ENCODE measurements at regions of chr19 and their contacts with region 1.

Region 1: DNA sequence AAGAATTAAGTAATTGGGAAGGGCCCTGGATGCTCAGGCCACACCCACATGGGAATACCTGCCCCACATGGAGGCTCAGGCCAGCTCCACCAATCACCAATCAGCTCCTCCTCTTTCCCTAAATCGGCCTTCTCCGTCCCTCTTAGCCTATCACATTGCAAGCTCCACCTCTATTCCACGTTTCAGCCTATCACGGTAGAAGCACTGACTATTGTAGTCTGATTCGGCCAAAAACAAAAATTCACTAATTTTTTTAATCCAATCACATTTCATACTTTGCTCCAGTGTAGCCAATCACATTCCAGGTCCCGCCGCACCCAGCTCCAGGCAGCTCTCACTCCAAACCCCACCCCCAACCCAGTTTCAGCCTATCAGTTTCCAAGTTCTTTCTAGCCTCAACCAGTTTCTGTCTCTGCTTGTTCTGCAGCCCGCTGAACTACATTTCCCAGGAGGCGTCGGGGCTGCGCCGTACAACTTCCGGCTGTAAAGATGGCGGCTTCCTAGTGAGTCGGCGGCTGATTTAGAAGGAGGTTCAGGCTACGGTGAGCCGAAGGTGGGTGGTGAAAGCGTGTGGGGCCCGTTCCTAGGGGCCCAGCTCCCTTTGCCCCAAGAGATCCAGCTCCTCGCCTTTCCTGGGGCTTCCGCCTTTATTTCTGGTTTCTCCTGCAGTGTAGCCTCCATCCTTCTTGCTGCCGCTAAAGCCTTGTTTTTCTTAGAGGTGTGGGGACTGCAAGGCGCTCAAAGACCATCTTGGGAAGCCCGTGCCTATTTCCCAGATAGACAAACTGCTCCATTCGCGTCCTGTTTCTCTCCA is at the start of gene BABAM1:
- H3K4me3 ChIP-seq: peak within 1 kb of the TSS; percentile 73
- H3K27ac ChIP-seq: peak within 1 kb of the TSS; percentile 62
- H3K4me1 ChIP-seq: no peaks in the 10 kb centered on the region
- CTCF ChIP-seq: no peak

Region 2: DNA sequence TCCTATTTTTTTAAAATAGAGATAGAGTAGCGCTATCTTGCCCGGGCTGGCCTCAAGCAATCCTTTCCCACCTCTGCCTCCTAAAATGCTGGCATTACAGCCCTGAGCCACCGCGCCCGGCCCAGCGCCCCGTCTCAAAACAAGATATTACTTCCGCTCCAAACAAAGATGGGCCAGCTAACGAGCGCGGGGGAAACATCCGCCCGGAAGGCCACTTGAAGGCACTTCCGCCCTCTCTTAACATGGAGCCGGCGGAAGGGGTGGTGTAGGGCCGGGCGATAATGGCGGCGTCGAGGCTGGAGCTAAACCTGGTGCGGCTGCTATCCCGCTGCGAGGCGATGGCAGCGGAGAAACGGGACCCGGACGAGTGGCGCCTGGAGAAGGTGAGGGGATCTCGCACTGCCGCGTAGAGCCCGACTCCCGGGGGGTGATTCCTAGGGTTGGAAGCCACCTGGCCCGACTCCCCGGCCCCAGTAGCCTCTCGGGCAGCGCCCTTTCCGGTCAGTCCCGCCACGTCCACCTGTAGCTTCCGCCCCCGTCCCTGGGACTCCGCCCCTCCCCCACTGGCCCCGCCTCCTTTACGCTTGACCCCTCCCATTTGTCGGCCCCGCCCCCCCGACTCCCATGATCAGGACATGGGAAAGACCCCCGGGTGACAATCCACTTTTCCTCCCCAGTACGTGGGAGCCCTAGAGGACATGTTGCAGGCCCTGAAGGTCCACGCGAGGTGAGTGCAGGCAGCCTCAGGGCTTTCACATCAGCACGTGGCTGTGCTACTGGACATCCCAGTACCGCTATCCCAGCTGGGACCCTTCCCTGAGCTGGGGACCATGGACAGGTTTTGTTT is 51.8 kb before region 1 on chr19 and contains the start of gene USE1:
- CTCF ChIA-PET with region 1: interaction called, 3 read pairs
- POLR2A ChIA-PET with region 1: interaction called, 23 read pairs
- H3K4me3 ChIP-seq: peak within 1 kb of the TSS; percentile 91
- H3K27ac ChIP-seq: peak within 1 kb of the TSS; percentile 63
- H3K4me1 ChIP-seq: no peaks in the 10 kb centered on the region
- CTCF ChIP-seq: peak; percentile 16; the same call in 1 of the 2 replicates

Region 3: DNA sequence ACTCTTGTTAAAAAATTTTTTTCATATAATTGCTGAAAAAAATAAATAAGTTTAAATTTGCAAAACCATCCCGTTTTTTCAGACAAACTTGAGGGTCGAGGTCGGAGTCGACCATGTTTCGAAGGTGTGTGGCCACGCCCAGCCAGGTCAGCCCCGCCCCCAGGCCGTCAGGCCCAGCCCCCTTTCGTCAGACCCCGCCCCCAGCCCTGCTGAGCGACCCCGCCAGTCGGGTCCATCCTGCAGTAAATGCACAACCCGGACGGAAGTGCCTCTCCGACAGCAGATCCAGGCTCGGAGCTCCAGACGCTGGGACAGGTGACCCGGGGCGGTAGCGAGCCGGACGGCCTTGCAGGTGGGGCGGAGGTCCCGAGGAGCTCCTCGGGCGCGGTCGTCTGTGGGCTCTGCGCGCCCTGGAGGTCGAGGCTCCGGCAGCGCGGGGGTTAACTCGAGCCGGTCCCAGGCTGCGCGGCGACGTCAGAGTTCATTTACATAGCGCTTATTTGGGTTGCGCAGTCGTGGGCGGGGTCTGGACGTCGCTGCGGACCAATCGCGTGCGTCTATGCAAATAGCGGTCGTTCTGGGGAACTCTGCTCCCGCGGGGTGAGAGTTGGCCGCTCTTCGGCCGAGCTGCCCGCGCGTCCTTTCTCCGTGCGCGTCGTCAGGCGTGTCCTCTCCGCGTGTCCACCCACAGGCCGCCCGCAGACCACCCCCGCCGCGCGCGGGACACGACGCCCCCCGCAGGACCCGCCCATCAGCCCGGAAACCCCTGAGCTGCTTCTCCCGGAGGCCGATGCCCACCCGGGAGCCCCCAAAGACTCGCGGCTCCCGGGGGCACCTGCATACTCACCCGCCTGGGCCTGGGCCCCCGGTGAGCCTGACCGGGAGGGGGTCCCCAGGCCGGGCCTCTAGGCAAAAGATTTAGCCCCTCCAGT is 40.9 kb before region 1 on chr19 and contains the start of gene OCEL1:
- CTCF ChIA-PET with region 1: no interaction called
- POLR2A ChIA-PET with region 1: interaction called, 11 read pairs
- H3K4me3 ChIP-seq: peak within 1 kb of the TSS; percentile 76
- H3K27ac ChIP-seq: peak within 1 kb of the TSS; percentile 47; the same call in 1 of the 2 replicates
- H3K4me1 ChIP-seq: no peaks in the 10 kb centered on the region
- CTCF ChIP-seq: no peak; the same call in 1 of the 2 replicates

Region 4: DNA sequence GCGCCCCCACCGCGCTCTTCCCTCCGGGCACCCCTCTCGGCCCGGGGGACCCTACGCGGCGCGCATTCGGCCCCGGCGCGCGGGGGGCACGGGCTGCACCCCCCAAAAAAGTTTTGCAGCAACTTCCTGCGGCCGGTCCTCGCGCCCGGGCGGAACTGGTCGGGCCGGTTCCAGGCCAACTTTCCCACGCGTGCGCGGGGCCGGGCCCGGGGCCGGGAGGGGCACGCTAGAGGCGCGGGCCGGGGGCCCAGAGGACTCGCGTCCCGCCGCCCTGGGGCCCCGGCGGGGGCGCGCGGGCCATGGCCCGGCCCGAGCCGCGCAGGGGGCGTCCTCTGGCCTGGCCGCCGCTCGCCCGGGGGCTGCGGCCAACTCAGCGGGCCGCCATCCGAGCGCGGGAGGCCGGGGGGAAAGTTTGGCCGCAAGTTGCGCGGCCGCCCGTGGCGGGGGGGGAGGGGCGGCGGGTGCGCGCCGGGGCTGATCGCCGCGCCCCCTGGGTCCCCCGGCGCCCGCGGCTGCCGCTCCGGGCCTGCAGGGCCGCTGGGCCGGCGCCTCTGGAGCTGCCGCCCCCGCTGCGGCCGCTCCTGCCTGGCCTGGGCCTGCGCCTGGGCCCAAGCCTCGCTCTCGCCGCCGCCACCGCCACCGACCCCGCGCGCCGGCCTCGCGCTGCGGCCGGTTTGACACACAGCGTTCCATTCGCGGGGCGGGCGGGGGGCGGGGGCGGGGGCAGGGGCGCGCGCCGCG is 21.8 kb before region 1 on chr19 and contains the start of gene NR2F6:
- CTCF ChIA-PET with region 1: interaction called, 6 read pairs
- POLR2A ChIA-PET with region 1: interaction called, 11 read pairs
- H3K4me3 ChIP-seq: peak within 1 kb of the TSS; percentile 76
- H3K27ac ChIP-seq: peak within 1 kb of the TSS; percentile 82; the same call in 1 of the 2 replicates
- H3K4me1 ChIP-seq: peaks cover 10% of the 10 kb centered on the region
- CTCF ChIP-seq: no peak

Region 5: DNA sequence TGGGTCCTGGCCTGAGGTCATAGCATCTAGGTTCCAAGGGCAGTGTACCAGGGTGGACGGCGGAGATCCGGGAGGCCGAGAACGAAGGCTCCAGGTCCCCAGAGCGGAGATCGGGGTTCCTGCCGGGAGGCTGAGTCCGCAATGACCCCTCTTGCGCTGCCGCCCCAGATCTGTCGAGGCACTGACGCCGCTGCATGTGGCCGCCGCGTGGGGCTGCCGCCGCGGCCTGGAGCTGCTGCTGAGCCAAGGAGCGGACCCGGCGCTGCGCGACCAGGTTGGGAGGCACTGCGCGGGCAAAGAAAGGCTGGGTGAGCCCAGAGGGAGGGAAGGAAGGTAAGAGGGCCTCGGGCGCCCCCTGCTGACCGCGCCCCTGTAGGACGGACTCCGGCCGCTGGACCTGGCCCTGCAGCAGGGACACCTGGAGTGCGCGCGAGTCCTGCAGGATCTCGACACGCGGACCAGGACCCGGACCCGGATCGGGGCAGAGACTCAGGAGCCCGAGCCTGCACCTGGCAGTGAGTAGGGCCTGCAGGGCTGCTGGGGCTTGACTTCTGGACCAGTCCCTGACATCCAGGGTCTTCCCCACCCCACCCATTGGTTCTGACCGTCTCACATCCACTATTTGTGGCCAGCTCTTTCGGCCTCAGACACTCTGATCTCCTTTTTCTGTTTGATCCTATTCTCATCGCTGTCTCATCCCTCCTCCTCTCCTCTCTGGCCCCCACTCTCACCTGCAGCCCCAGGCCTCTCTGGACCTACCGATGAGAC is 15.5 kb after region 1 on chr19:
- CTCF ChIA-PET with region 1: interaction called, 37 read pairs
- POLR2A ChIA-PET with region 1: interaction called, 4 read pairs
- H3K4me3 ChIP-seq: no peak overlapping the region
- H3K27ac ChIP-seq: no peak overlapping the region
- H3K4me1 ChIP-seq: no peaks in the 10 kb centered on the region
- CTCF ChIP-seq: peak; percentile 99

Region 6: GRCh38 chr19:17359905-17360800 is 93.0 kb after region 1 on chr19:
- CTCF ChIA-PET with region 1: no interaction called
- POLR2A ChIA-PET with region 1: no interaction called
- H3K4me3 ChIP-seq: no peak overlapping the region
- H3K27ac ChIP-seq: no peak overlapping the region
- H3K4me1 ChIP-seq: no peaks in the 10 kb centered on the region
- CTCF ChIP-seq: no peak